AG04450 (cell line): ENCODE measurements at regions of chr1 and their contacts with region 1.

Region 1: GRCh38 chr1:205791568-205792180 is 16.4 kb upstream of the RAB29 start:
- DNase-seq: no peak
- H3K4me3 ChIP-seq: no peak overlapping the region
- H3K27ac ChIP-seq: no peak overlapping the region
- H3K27me3 ChIP-seq: no peaks in the 10 kb centered on the region
- CTCF ChIP-seq: peak; percentile 90

Region 2: GRCh38 chr1:205807100-205807499 is 15.4 kb after region 1 on chr1:
- CTCF ChIA-PET with region 1: interaction called, 20 read pairs
- POLR2A ChIA-PET with region 1: no interaction called
- DNase-seq: no peak
- H3K4me3 ChIP-seq: no peak overlapping the region
- H3K27ac ChIP-seq: no peak overlapping the region
- H3K27me3 ChIP-seq: no peaks in the 10 kb centered on the region
- CTCF ChIP-seq: no peak

Region 3: DNA sequence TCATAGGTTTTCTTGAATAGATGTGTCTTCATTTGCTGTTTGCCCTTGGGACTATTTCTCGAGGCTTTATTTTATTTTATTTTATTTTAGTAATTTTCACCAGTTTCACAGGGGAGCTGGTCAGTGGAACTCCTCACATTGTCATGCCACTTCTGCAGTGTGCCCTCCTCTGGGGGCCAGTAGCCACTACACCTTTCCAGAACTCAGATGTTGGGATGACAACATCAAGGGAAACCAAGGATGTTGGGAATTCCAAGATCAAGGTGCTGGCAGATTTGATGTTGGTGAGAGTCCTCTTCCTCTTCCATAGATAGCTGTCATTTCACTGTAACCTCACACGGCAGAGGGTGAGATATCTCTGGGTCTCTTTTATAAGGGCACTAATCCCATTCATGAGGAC is 116.1 kb after region 1 on chr1:
- CTCF ChIA-PET with region 1: interaction called, 21 read pairs
- POLR2A ChIA-PET with region 1: interaction called, 3 read pairs
- DNase-seq: no peak
- H3K4me3 ChIP-seq: no peak overlapping the region
- H3K27ac ChIP-seq: no peak overlapping the region
- H3K27me3 ChIP-seq: peaks cover 8% of the 10 kb centered on the region
- CTCF ChIP-seq: peak; percentile 67

Region 4: GRCh38 chr1:205983925-205984725 is 192.5 kb after region 1 on chr1:
- CTCF ChIA-PET with region 1: interaction called, 197 read pairs
- POLR2A ChIA-PET with region 1: no interaction called
- DNase-seq: peak; percentile 16
- H3K4me3 ChIP-seq: no peak overlapping the region
- H3K27ac ChIP-seq: peak overlapping the region; percentile 2
- H3K27me3 ChIP-seq: no peaks in the 10 kb centered on the region
- CTCF ChIP-seq: peak; percentile 94